ENCODE measurements at regions of chr2 and their contacts with region 1.

Region 1: DNA sequence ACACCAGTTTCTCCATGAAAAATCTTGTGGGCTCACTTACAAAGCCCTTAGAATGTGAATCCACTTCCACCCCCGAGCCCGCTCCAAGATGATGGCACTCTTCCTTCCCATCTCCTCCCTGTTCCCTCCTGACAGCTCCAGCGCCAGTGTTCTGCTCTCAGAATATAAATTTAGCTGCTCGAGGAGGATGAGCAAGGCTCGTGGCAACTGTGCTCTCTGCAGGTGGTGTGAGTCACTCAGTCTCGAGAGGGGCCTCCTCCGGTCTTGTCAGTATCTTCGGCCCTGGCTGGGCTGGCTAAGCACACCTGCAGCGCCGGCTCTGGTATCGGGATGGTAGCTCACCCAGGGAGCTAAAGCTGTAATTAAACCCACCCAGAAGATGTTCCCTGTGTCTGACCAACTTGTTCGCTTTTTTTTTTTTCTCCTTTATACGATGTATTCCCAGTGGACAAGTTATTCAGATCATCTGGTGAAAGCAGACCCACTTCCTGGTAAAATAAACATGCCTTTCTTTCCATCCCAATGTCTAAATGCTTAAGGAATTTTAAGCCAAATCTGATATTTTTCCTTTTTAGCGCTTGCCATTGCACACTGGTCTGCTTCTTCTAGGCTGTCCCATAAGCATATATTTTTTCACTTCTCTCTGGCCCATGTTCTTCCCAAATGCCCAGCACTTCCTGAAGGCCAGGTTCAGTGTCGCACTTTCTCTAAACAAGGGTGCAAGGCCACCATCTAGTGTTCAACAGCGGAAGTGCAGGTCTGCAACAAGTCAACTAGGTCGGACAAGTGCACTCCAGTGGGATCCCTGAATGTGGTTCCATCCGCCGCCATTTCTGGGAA is 31.4 kb upstream of the YPEL5 start:
- DNase-seq: peak; percentile 66
- CTCF ChIP-seq: peak; percentile 86

Region 2: DNA sequence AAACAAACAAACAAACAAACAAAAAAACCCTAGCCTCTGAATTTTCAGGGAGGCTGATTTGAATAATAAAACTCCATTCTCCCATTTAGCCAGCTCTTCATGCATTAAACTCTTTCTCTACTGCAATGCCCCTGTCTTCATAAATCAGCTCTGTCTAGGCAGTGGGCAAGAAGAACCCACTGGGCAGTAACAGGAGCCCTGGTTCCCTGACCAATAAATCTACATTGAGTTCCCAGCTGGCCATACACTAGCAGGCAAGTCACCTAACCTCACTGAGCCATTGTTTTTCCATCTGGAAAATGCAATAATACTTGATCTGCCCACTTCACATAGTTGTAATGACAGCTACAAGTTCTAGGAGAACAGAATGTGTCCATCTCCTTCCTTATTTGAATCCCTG is 26.2 kb before region 1 on chr2:
- CTCF ChIA-PET with region 1: interaction called, 52 read pairs
- POLR2A ChIA-PET with region 1: no interaction called
- DNase-seq: no peak
- CTCF ChIP-seq: no peak

Region 3: GRCh38 chr2:30139131-30139870 is 23.9 kb after region 1 on chr2:
- CTCF ChIA-PET with region 1: interaction called, 16 read pairs
- POLR2A ChIA-PET with region 1: no interaction called
- DNase-seq: no peak
- CTCF ChIP-seq: no peak

Region 4: GRCh38 chr2:30601375-30601774 is 486.0 kb after region 1 on chr2:
- CTCF ChIA-PET with region 1: no interaction called
- POLR2A ChIA-PET with region 1: no interaction called
- DNase-seq: no peak
- CTCF ChIP-seq: no peak

Measured in GM10248 (cell line).